ENCODE measurements at regions of chr4 and their contacts with region 1.

Region 1: GRCh38 chr4:48141048-48141447 is 7.0 kb upstream of the TXK start:
- DNase-seq: no peak
- ATAC-seq: peak; percentile 75
- H3K4me3 ChIP-seq: no peak overlapping the region
- H3K27ac ChIP-seq: no peak overlapping the region
- H3K4me1 ChIP-seq: peaks cover 17% of the 10 kb centered on the region
- H3K27me3 ChIP-seq: no peaks in the 10 kb centered on the region
- CTCF ChIP-seq: peak; percentile 21 to 55 (median 49); a peak in 4 of 6 replicates
- EP300 ChIP-seq: no peak
- POLR2A ChIP-seq: no peak
- RAD21 ChIP-seq: peak; percentile 37; the same call in 1 of the 2 replicates

Region 2: DNA sequence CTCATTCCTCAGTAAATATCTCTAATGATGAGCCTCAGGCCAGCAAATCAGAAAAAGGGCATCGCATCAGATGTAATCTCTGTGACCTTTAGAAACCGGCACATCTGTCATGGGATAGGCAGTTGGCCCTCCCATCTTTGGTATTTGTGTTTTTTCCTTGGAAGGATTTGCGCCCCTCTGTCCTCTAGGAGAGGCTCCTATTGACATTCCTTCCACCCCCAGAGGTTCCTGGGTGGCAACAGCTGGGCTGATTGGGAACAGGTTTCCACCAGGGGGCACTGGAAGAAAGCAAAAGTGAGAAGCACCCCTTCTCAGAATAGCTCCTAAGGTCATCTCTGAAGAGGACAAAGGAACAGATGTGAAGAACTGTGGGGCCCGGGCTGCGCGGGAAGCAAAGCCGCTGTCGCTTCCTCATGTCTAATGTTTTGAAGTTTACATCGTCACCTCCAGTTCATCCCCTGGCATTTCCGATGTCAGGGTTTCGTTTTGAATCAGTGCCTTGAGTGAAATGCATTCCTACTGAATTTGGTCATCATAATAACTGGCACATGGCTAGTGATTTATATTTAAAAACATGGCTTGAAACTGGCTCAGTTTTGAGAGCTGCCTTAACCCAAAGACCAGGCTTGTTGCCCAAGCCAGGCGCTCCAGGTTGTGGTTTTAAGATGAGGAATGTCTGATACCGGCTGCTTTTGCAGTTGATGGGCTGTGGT is 13.2 kb before region 1 on chr4:
- CTCF ChIA-PET with region 1: interaction called, 71 read pairs
- POLR2A ChIA-PET with region 1: interaction called, 5 read pairs
- RAD21 ChIA-PET with region 1: interaction called, 20 read pairs
- SMC1A ChIA-PET with region 1: interaction called, 50 read pairs
- in situ Hi-C with region 1: no loop called
- intact Hi-C with region 1: no loop called
- DNase-seq: peak; percentile 81
- ATAC-seq: peak; percentile 92
- H3K4me3 ChIP-seq: no peak overlapping the region
- H3K27ac ChIP-seq: no peak overlapping the region
- H3K4me1 ChIP-seq: peaks cover 15% of the 10 kb centered on the region
- H3K27me3 ChIP-seq: no peaks in the 10 kb centered on the region
- CTCF ChIP-seq: peak; percentile 64 to 71 (median 66)
- EP300 ChIP-seq: no peak
- POLR2A ChIP-seq: 0 out of 2 replicates have a peak, but pooled peaks have one; percentile 32
- RAD21 ChIP-seq: peak; percentile 85

Region 3: GRCh38 chr4:48153791-48154550 is 12.9 kb after region 1 on chr4:
- CTCF ChIA-PET with region 1: interaction called, 3 read pairs
- POLR2A ChIA-PET with region 1: no interaction called
- RAD21 ChIA-PET with region 1: interaction called, 3 read pairs
- SMC1A ChIA-PET with region 1: interaction called, 12 read pairs
- in situ Hi-C with region 1: no loop called
- intact Hi-C with region 1: no loop called
- DNase-seq: peak; percentile 39
- ATAC-seq: peak; percentile 91
- H3K4me3 ChIP-seq: no peak overlapping the region
- H3K27ac ChIP-seq: peak overlapping the region; percentile 63
- H3K4me1 ChIP-seq: peaks cover 6% of the 10 kb centered on the region; the same call in 1 of the 2 replicates
- H3K27me3 ChIP-seq: no peaks in the 10 kb centered on the region
- CTCF ChIP-seq: no peak
- EP300 ChIP-seq: no peak
- POLR2A ChIP-seq: no peak
- RAD21 ChIP-seq: no peak

Region 4: GRCh38 chr4:48173056-48173991 is 32.3 kb after region 1 on chr4:
- CTCF ChIA-PET with region 1: interaction called, 3 read pairs
- POLR2A ChIA-PET with region 1: no interaction called
- RAD21 ChIA-PET with region 1: no interaction called
- SMC1A ChIA-PET with region 1: interaction called, 15 read pairs
- in situ Hi-C with region 1: no loop called
- intact Hi-C with region 1: no loop called
- DNase-seq: peak; percentile 55
- ATAC-seq: peak; percentile 85
- H3K4me3 ChIP-seq: no peak overlapping the region
- H3K27ac ChIP-seq: peak overlapping the region; percentile 59
- H3K4me1 ChIP-seq: peaks cover 36% of the 10 kb centered on the region
- H3K27me3 ChIP-seq: no peaks in the 10 kb centered on the region
- CTCF ChIP-seq: no peak
- EP300 ChIP-seq: no peak; a peak in 1 of 4 replicates
- POLR2A ChIP-seq: no peak
- RAD21 ChIP-seq: no peak

Measured in GM12878 (cell line).